ENCODE measurements at regions of chr11 and their contacts with region 1.

Region 1: DNA sequence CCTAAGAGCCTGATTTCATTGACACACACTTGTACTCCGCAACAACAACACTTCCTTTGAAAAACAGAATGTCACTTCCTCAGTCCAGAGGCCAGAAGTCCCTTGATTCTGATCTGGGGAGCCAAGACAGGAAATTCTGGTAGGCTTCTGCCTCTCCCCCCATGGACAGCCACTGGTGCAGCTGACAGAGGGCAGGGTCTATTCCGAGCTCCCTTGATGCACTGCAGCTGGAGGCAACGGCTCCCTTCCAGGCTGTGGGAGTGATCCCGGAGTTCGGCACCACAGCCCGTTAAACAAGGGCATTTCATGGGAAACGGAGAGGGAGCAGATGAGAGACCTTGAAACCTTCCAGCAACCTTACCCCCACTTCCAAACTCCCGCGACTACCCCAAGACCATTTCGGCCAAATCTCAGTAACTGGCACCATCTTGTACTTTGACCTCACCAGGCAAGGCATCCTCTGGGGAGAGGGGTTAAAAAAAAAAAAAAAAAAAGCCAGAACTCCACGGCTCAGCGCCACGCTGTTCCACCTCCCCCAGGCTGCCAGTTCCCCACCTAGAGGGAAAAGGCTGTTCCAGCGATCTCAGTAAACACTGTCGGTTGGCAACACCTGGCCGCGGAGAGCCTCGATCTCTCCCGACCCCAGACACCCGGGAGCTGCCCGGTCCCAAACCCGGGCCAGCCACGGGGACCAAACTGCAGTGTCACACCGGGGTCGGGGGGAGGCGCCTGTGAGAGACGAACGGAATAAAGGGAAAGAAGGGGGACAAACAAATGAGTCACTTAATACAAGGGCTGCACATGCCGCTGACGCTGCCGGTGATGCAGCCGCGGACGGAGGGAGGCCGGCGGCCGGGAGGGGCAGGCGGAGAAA is 1.1 kb downstream of the GAB2 start:
- DNase-seq: peak; percentile 87
- ATAC-seq: peak; percentile 48
- H3K4me3 ChIP-seq: peak overlapping the region; percentile 35 to 84 (median 75)
- H3K4me3 Mint-ChIP-seq: peak overlapping the region; percentile 97
- H3K27ac ChIP-seq: peak overlapping the region; percentile 48 to 62
- H3K27ac Mint-ChIP-seq: peak overlapping the region; percentile 98
- H3K4me1 ChIP-seq: peaks cover 42 to 58% of the 10 kb centered on the region in 2 donors
- H3K4me1 Mint-ChIP-seq: peaks cover 74% of the 10 kb centered on the region
- H3K27me3 ChIP-seq: no peaks in the 10 kb centered on the region
- H3K27me3 Mint-ChIP-seq: no peaks in the 10 kb centered on the region
- CTCF ChIP-seq: peak; percentile 63

Region 2: DNA sequence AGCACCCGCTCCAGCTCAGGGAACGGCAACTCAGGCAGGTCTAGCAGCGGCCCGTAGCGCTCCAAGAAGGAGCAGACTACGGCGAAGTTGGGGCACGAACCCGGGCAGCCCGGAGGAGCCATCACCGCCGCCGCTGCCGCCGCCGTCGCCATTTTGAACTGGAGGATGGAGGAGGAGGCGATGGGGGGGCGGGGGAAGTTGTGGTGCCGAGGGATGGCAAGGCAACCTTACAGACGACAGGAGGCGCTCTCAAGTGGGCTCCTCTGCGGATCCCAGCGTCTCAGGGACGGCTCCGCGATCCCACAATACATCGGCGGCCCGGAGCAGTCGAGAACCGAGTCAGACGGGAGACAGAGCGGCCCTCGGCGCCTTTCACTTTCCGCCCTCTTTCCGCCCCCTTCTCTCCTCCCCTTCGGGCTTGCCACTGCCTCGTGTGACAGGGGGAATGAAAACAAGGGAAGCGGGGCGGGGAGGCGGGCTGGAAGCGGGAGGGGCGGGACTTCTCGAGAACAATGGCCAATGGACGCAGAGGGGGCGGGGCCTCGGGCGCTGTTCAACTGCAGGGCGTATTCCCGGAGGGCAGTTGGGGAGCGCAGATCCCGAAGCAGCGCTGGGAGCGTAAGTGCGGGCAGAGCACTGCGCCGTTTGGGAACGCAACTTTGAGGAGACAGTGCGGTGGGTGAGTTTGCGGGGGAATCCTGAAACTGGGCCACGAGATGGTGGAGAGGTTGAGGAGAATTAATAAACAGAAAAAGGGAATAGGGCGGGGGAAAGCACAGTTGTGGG is 595.8 kb before region 1 on chr11 and contains the starts of genes AAMDC and RSF1:
- CTCF ChIA-PET with region 1: no interaction called
- POLR2A ChIA-PET with region 1: no interaction called
- intact Hi-C with region 1: loop called (anchors 10 kb)
- DNase-seq: peak; percentile 98
- ATAC-seq: peak; percentile 83
- H3K4me3 ChIP-seq: peak within 1 kb of the TSS; percentile 77 to 98 (median 94)
- H3K4me3 Mint-ChIP-seq: peak within 1 kb of the TSS; percentile 100
- H3K27ac ChIP-seq: peak within 1 kb of the TSS; percentile 81 to 83
- H3K27ac Mint-ChIP-seq: peak within 1 kb of the TSS; percentile 95
- H3K4me1 ChIP-seq: peaks cover 14 to 26% of the 10 kb centered on the region in 2 donors
- H3K4me1 Mint-ChIP-seq: peaks cover 36% of the 10 kb centered on the region
- H3K27me3 ChIP-seq: no peaks in the 10 kb centered on the region
- H3K27me3 Mint-ChIP-seq: no peaks in the 10 kb centered on the region
- CTCF ChIP-seq: peak; percentile 73
- total RNA-seq, gene AAMDC: 4.6 and 7.5 TPM in 2 replicates
- total RNA-seq, gene RSF1: 100 and 104 TPM in 2 replicates

Region 3: GRCh38 chr11:78161962-78162371 is 254.6 kb before region 1 on chr11:
- CTCF ChIA-PET with region 1: no interaction called
- POLR2A ChIA-PET with region 1: no interaction called
- intact Hi-C with region 1: no loop called
- DNase-seq: no peak
- ATAC-seq: no peak
- H3K4me3 ChIP-seq: no peak overlapping the region
- H3K4me3 Mint-ChIP-seq: no peak overlapping the region
- H3K27ac ChIP-seq: no peak overlapping the region
- H3K27ac Mint-ChIP-seq: no peak overlapping the region
- H3K4me1 ChIP-seq: no peaks in the 10 kb centered on the region
- H3K4me1 Mint-ChIP-seq: no peaks in the 10 kb centered on the region
- H3K27me3 ChIP-seq: no peaks in the 10 kb centered on the region
- H3K27me3 Mint-ChIP-seq: no peaks in the 10 kb centered on the region
- CTCF ChIP-seq: no peak

Region 4: GRCh38 chr11:78188286-78189173 is 228.0 kb before region 1 on chr11 and contains the starts of genes KCTD21 and USP35:
- CTCF ChIA-PET with region 1: interaction called, 3 read pairs
- POLR2A ChIA-PET with region 1: no interaction called
- intact Hi-C with region 1: loop called (anchors 2 kb)
- DNase-seq: peak; percentile 93
- ATAC-seq: peak; percentile 93
- H3K4me3 ChIP-seq: peak within 1 kb of the TSS; percentile 67 to 96 (median 90)
- H3K4me3 Mint-ChIP-seq: peak within 1 kb of the TSS; percentile 100
- H3K27ac ChIP-seq: peak within 1 kb of the TSS; percentile 55 to 77
- H3K27ac Mint-ChIP-seq: peak within 1 kb of the TSS; percentile 93
- H3K4me1 ChIP-seq: peaks cover 24 to 28% of the 10 kb centered on the region in 2 donors
- H3K4me1 Mint-ChIP-seq: peaks cover 45% of the 10 kb centered on the region
- H3K27me3 ChIP-seq: no peaks in the 10 kb centered on the region
- H3K27me3 Mint-ChIP-seq: no peaks in the 10 kb centered on the region
- CTCF ChIP-seq: no peak
- total RNA-seq, gene KCTD21: 6.3 and 8.0 TPM in 2 replicates
- total RNA-seq, gene USP35: 4.5 and 6.0 TPM in 2 replicates

Region 5: GRCh38 chr11:78371221-78371891 is 45.2 kb before region 1 on chr11:
- CTCF ChIA-PET with region 1: interaction called, 11 read pairs
- POLR2A ChIA-PET with region 1: no interaction called
- intact Hi-C with region 1: no loop called
- DNase-seq: peak; percentile 14
- ATAC-seq: peak; percentile 88
- H3K4me3 ChIP-seq: no peak overlapping the region
- H3K4me3 Mint-ChIP-seq: no peak overlapping the region
- H3K27ac ChIP-seq: no peak overlapping the region
- H3K27ac Mint-ChIP-seq: no peak overlapping the region
- H3K4me1 ChIP-seq: peaks cover 4 to 7% of the 10 kb centered on the region in 2 donors
- H3K4me1 Mint-ChIP-seq: peaks cover 39% of the 10 kb centered on the region
- H3K27me3 ChIP-seq: no peaks in the 10 kb centered on the region
- H3K27me3 Mint-ChIP-seq: no peaks in the 10 kb centered on the region
- CTCF ChIP-seq: no peak

Region 6: DNA sequence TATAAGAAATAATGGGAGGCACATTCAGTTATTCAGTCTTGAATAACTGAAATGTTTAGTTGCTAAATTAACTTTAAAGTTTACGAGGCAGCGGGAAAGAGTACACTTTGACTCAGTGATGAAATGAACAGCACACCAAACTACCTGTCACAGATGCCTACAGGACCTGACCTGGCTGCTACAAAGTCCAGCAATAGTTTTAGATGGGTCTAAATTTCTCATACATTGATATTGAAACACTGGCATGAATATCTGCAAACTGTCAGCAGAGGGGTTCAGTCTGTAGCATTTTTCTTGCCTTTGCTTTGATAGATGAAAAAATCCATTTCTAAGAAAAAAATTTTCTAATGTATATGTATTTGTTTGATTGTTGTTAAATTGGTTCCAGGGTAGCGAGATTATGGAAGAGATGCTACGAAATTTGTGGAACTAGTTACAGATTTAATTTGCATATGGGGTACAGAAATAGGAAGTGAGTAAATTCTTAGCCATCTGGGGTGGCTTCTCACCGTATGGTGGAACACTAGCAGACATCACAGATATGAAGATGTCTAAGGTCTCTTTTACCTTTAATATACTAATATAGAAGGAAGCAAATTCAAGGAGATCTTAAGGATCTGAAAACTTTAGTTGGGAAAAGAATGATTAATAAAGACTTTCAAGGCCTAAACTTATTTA is 21.9 kb after region 1 on chr11:
- CTCF ChIA-PET with region 1: interaction called, 13 read pairs
- POLR2A ChIA-PET with region 1: interaction called, 4 read pairs
- intact Hi-C with region 1: loop called (anchors 1 kb)
- DNase-seq: peak; percentile 79
- ATAC-seq: peak; percentile 96
- H3K4me3 ChIP-seq: no peak overlapping the region
- H3K4me3 Mint-ChIP-seq: peak overlapping the region; percentile 18
- H3K27ac ChIP-seq: peak overlapping the region; percentile 28 to 64
- H3K27ac Mint-ChIP-seq: peak overlapping the region; percentile 46
- H3K4me1 ChIP-seq: peaks cover 15 to 21% of the 10 kb centered on the region in 2 donors
- H3K4me1 Mint-ChIP-seq: peaks cover 27% of the 10 kb centered on the region
- H3K27me3 ChIP-seq: no peaks in the 10 kb centered on the region
- H3K27me3 Mint-ChIP-seq: no peaks in the 10 kb centered on the region
- CTCF ChIP-seq: no peak